Dorsolateral prefrontal cortex (tissue), 120 donors: ENCODE measurements at regions of chr20 and their contacts with region 1.

Region 1: DNA sequence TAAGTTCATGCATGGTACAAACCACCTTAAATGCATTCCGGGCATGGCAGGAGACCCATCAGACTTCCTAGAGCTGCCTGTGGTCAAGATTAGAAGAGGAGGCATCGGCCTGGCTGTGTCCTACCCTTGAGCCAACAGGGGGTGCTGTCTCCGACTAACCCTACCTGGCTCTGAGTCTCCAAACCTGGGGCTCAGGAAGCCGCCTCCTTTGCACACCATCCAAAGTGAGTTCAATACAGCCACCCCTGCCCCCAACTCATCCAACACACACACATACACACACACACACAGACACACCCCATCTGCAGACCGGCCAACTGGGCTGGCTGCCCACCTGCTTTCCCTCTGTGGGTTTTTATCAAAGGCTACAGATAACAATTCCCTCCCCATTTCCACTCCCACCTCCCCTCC is 77.0 kb downstream of the JPH2 start:
- DNase-seq: no peak
- H3K4me3 ChIP-seq: no peak overlapping the region
- H3K27ac ChIP-seq: no peak overlapping the region
- H3K27me3 ChIP-seq: peaks cover 0 to 41% (median 14%) of the 10 kb centered on the region in 45 donors
- CTCF ChIP-seq: no peak

Region 2: DNA sequence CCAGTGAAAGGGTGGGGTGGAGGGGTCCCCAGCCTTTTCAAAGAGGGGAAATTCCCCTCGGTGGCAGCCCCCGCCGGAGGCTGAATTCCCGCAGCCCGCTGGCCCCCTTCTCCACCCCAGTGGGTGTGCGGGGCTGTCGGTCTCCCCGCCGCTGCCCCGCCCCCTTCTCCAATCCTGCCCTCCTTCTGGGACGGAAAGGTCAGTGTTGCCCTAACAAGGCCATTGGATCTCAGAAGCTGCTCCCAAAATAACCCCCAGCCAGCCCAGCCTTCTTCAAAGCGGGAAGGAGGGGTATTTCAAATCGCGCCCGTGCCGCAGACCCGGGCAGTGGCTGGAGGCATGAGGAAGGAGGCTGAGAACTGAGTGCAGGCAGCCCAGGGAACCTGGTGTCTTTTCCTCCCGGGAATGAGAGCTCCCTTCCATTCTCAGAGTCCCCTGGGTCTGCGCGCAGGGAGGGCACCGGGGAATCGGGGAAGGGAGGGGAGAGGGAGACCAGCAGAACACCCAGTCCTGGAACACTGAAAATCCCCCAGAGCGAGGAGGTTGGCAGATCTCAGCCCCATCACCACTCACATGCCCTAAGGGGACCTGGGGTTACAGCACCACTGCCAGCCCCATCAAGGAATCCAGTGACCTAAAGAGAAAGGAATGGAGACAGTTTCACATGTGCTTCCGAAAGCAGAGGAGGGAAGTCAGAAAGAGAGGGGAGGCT is 77.3 kb after region 1 on chr20 and contains the start of gene JPH2:
- intact Hi-C with region 1: loop called (anchors 2 to 10 kb)
- DNase-seq: no peak
- H3K4me3 ChIP-seq: peak within 1 kb of the TSS in 55 of 59 donors; percentile 15 to 63 (median 39)
- H3K27ac ChIP-seq: peak within 1 kb of the TSS in 9 of 59 donors; percentile 18 to 63 (median 48)
- H3K27me3 ChIP-seq: peaks cover 0 to 36% (median 14%) of the 10 kb centered on the region in 45 donors
- CTCF ChIP-seq: no peak
- total RNA-seq, gene JPH2: 0.21 to 8.8 (median 0.92) TPM in 119 of 120 experiments, not detected in the other

Region 3: DNA sequence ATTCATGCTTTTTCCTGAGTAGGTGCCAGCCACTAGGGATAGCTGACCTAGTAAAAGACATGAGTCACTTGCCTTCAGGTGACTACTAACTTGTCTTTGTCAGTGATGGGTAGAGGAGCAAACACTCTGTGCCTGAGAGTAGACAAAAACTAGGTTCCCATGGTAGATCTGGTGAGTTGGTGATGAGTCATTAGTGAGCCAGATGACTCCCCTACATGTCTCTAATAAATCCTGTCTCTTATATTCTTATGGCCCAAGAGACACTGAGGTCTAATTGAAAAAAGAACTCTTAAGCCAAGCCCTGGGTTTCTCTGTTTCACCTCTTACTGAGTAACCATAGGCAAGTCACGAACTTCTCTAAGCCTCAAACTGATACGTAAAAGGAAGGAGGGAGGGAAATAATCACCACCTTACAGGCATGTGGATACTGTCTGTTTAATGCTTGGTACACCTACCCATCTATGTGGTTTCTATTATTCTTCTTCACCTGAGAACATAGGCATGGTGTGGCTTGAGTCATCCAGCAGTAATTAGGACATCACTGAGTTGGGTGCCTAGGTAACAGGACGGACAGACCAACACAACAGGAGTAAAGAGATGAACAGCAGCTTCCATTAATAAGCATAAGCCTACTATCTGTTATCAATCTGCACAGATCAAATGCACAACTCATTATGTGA is 386.0 kb after region 1 on chr20:
- intact Hi-C with region 1: no loop called
- DNase-seq: no peak
- H3K4me3 ChIP-seq: no peak overlapping the region
- H3K27ac ChIP-seq: peak overlapping the region in 21 of 59 donors; percentile 5 to 78 (median 26)
- H3K27me3 ChIP-seq: no peaks in the 10 kb centered on the region
- CTCF ChIP-seq: no peak